Psoas muscle (tissue), 8 donors: ENCODE measurements at regions of chr12 and their contacts with region 1.

Region 1: DNA sequence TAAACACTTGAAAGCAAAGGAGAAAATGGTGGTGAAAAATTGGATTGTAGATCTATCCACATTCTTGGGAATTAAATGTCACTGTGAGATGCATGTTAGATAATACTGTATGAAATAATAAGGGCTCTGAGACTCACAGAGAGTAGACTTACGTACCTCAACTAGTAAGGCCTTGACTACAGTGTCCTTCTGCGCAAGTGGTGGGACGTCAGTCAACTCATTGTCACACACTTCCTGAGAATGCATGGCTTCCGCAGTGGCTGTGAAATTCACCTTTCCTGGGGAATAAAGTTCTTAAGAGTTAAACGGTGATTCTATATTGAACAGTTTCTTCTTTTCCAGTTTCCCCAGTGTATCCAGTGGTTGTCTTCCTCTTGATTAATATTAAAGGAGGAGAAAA is 32.6 kb upstream of the PZP start:
- DNase-seq: no peak
- ATAC-seq: no peak
- H3K4me3 ChIP-seq: peak overlapping the region; percentile 56
- H3K27ac ChIP-seq: peak overlapping the region; percentile 46
- H3K4me1 ChIP-seq: no peaks in the 10 kb centered on the region
- H3K27me3 ChIP-seq: no peaks in the 10 kb centered on the region
- CTCF ChIP-seq: no peak

Region 2: DNA sequence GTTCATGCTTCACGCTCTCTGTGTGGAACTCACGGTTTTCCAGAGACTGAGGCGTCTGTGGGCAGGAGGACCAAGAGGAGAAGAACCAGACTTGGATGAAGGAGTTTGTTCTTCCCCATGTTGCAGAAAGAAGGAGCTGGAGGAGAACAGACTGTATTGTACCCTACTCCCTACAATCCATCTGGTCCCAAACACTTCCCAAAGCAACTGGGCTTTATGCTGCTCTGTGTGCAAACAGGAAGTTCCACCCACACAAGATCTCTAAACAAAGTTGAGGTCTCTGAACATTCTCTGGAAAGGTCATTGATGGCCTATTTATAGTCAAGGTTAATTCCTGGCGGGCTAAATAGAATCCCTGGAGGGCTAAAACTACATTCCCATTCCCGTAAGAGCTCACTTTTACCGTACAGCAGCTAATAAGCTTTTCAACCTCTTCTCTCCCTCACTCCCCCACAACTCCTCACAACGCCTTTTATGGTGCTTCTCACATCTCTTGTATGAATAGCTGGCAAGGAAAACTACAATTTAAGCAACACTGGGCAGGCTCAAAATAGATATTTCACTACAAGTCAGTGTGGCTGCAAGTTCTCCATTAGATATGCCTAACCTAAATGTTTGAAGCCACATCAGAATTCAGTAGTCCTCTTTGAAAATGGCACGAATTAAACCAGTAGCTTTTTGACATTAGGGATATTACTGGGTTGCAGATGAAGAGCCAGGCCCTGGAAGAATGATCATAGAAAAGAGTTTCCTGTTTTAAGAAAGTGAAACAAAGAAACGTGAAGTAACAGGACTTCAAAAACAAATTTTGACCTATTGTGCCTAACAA is 124.8 kb before region 1 on chr12 and contains the start of gene A2M:
- intact Hi-C with region 1: loop called in 1 of 2 experiments (anchors 2 kb)
- DNase-seq: no peak
- ATAC-seq: peak; percentile 66 to 85 (median 84)
- H3K4me3 ChIP-seq: peak within 1 kb of the TSS; percentile 58
- H3K27ac ChIP-seq: peak within 1 kb of the TSS; percentile 71
- H3K4me1 ChIP-seq: peaks cover 36% of the 10 kb centered on the region
- H3K27me3 ChIP-seq: no peaks in the 10 kb centered on the region
- CTCF ChIP-seq: no peak
- total RNA-seq, gene A2M: 86.0 to 242 (median 123) TPM